ENCODE measurements at regions of chr1 and their contacts with region 1.

Region 1: GRCh38 chr1:156728597-156729462 is at the start of gene ISG20L2:
- DNase-seq: peak; percentile 85
- H3K4me3 ChIP-seq: peak within 1 kb of the TSS; percentile 77 to 92 (median 87)
- H3K27ac ChIP-seq: peak within 1 kb of the TSS; percentile 97 to 99 (median 98)
- H3K4me1 ChIP-seq: peaks cover 20 to 58% (median 34%) of the 10 kb centered on the region in 3 donors
- H3K27me3 ChIP-seq: no peaks in the 10 kb centered on the region
- CTCF ChIP-seq: peak in 1 of 6 experiments; percentile 15
- POLR2A ChIP-seq: peak in 2 of 4 donors; percentile 4 to 8
- total RNA-seq, gene ISG20L2: 22.3 to 32.8 (median 28.4) TPM

Region 2: DNA sequence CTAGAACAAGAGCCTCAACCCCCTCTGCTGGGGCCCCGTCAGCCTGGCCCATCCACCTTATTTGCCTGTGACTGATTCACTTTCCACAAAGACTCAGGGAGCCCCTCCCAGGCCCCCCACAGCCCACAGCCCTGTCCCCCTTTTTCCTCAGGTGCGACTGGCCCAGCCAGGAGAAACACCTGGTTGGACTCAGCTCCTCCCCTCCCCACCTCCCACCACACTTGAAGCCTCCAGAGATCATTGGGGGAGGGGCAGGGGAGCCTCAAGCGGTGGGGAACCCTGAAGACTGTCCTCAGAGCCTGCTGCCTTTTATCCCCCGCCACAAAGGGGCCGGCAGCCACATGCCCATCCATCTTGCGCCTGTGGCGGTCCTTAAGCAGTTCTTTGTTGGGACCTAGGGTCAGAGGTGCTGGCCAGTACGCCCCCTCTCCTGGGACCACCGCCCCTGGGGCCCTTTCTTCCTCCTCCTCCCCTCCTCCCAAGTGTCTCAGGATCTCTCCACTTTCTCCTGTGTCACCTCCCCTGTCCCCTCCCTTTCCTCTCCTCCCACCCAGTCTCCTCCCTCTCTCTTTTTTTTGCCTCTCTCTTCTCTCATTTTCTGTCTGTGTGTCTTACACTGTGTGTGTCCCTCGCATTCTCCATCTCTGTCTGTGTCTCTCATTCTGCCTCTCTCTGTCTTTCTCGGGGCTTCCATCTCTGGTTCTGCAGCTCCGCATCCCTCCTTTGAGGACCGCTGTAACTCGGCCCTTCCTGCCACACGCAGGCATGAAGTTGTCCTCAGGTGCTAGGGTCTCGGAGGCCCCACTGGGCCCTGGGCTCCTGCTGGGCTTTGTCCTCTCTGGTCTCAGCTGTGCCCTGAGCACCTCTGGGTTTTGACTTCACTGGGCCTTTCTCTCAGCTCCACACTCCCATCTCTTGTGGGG is 35.6 kb before region 1 on chr1:
- intact Hi-C with region 1: loop called (anchors 5 kb)
- DNase-seq: no peak
- H3K4me3 ChIP-seq: no peak overlapping the region
- H3K27ac ChIP-seq: peak overlapping the region; percentile 68 to 89 (median 84)
- H3K4me1 ChIP-seq: peaks cover 34 to 78% (median 55%) of the 10 kb centered on the region in 3 donors
- H3K27me3 ChIP-seq: peaks cover 0 to 62% (median 0%) of the 10 kb centered on the region in 4 donors
- CTCF ChIP-seq: no peak
- POLR2A ChIP-seq: no peak

Measured in esophagus squamous epithelium (tissue), 5 donors.